ENCODE measurements at regions of chr14 and their contacts with region 1.

Region 1: GRCh38 chr14:74478996-74479635 is 14.0 kb downstream of the NPC2 start:
- DNase-seq: peak in 1 of 2 experiments; percentile 36
- H3K4me3 ChIP-seq: no peak overlapping the region
- H3K27ac ChIP-seq: no peak overlapping the region
- H3K4me1 ChIP-seq: no peaks in the 10 kb centered on the region
- H3K27me3 ChIP-seq: no peaks in the 10 kb centered on the region
- CTCF ChIP-seq: peak; percentile 95

Region 2: GRCh38 chr14:74324931-74325361 is 154.2 kb before region 1 on chr14:
- CTCF ChIA-PET with region 1: no interaction called
- POLR2A ChIA-PET with region 1: interaction called, 4 read pairs
- intact Hi-C with region 1: loop called (anchors 1 kb)
- DNase-seq: peak in 1 of 2 experiments; percentile 39
- H3K4me3 ChIP-seq: no peak overlapping the region
- H3K27ac ChIP-seq: no peak overlapping the region
- H3K4me1 ChIP-seq: no peaks in the 10 kb centered on the region
- H3K27me3 ChIP-seq: no peaks in the 10 kb centered on the region
- CTCF ChIP-seq: peak; percentile 95

Region 3: GRCh38 chr14:74362361-74362915 is 116.7 kb before region 1 on chr14:
- CTCF ChIA-PET with region 1: interaction called, 7 read pairs
- POLR2A ChIA-PET with region 1: no interaction called
- intact Hi-C with region 1: loop called (anchors 1 kb)
- DNase-seq: peak; percentile 72 to 92
- H3K4me3 ChIP-seq: no peak overlapping the region
- H3K27ac ChIP-seq: no peak overlapping the region
- H3K4me1 ChIP-seq: no peaks in the 10 kb centered on the region
- H3K27me3 ChIP-seq: no peaks in the 10 kb centered on the region
- CTCF ChIP-seq: peak; percentile 100